Dorsolateral prefrontal cortex (tissue), 120 donors: ENCODE measurements at regions of chr1 and their contacts with region 1.

Region 1: GRCh38 chr1:83931658-83932253 is 67.2 kb downstream of the TTLL7 start:
- DNase-seq: peak in 1 of 10 donors; percentile 14
- H3K4me3 ChIP-seq: no peak overlapping the region
- H3K27ac ChIP-seq: peak overlapping the region in 57 of 59 donors; percentile 21 to 87 (median 74)
- H3K27me3 ChIP-seq: no peaks in the 10 kb centered on the region
- CTCF ChIP-seq: peak; percentile 41 to 88 (median 76)

Region 2: DNA sequence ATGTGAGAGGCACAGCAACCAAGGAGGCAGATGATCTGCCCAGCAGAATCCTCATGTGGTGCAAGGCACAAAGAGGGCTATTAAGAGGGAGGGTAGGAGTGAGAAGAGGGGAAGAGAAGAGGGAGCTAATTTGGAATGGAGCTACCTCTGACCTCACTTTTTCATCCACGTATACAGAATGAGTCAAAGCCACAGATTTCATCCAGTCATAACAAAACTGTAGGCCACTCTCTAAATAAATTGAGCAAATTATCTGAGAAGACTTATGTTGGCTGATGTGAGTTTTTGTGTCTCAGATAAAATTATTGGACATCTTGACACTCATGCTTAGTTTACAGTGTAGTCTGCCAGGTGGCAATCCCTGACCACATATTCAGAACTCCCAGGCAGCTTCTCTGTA is 258.4 kb before region 1 on chr1:
- intact Hi-C with region 1: no loop called
- DNase-seq: no peak
- H3K4me3 ChIP-seq: no peak overlapping the region
- H3K27ac ChIP-seq: no peak overlapping the region
- H3K27me3 ChIP-seq: no peaks in the 10 kb centered on the region
- CTCF ChIP-seq: no peak

Region 3: DNA sequence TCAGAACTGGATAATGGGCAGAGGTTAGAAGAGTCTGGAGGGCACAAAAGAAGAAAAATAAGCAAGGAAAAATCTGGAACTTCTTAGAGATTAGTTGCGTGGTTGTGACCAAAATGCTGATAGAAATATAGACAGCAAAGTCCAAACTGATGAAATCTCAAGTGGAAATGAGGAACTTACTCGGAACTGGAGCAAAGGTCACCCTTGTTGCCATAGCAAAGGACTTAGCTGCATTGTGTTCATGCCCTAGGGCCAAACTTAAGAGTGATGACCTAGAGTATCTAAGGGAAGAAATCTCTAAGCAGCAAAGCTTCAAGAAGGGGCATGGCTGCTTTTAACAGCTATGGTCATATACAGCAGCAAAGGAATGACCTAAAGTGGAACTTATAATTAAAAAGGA is 112.8 kb before region 1 on chr1:
- intact Hi-C with region 1: no loop called
- DNase-seq: no peak
- H3K4me3 ChIP-seq: no peak overlapping the region
- H3K27ac ChIP-seq: no peak overlapping the region
- H3K27me3 ChIP-seq: no peaks in the 10 kb centered on the region
- CTCF ChIP-seq: no peak

Region 4: GRCh38 chr1:84077476-84078107 is 145.8 kb after region 1 on chr1:
- intact Hi-C with region 1: loop called in 1 of 2 experiments (anchors 5 kb)
- DNase-seq: peak; percentile 71 to 90 (median 78)
- H3K4me3 ChIP-seq: peak overlapping the region; percentile 70 to 96 (median 88)
- H3K27ac ChIP-seq: peak overlapping the region; percentile 68 to 99 (median 95)
- H3K27me3 ChIP-seq: no peaks in the 10 kb centered on the region
- CTCF ChIP-seq: peak in 30 of 56 donors; percentile 6 to 50 (median 28)

Region 5: DNA sequence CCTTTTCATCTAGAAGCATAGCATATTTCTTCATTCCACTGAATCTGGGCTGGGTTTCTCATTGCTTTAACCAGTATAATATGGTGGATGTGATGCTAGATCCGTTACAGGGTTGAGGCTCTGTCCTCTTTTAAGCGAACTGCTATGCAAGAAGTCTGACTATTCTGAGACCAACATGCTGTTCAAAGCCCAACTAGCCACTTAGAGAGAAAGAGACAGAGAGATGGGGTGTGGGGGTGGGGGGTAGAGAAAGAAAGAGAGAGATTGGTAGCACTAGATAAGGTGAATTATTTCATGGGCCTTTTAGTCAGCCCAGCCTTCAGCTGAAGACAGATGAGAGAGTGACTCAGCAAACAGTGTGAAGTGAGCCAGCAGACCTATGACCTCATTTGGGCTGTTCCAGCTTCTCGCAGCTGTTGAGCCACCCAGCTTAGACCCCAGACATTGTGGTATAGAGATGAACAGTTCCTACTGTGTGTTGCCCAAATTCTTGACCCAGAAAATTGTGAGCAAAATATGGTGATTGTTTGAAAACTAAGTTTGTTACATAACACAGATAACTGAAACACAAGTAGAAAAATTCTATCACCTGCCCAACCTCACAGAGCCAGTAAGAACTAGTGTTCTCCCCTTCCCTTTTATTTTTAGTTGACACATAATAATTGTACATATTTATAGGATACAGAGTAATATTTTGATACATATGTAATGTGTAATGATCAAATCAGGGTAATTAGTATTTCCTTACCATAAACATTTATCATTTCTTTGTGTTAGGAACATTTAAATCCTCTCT is 171.6 kb after region 1 on chr1:
- intact Hi-C with region 1: loop called in 1 of 2 experiments (anchors 1 kb)
- DNase-seq: peak in 7 of 10 donors; percentile 40 to 73 (median 55)
- H3K4me3 ChIP-seq: no peak overlapping the region
- H3K27ac ChIP-seq: peak overlapping the region in 50 of 59 donors; percentile 2 to 82 (median 54)
- H3K27me3 ChIP-seq: no peaks in the 10 kb centered on the region
- CTCF ChIP-seq: peak in 3 of 56 donors; percentile 6 to 22 (median 10)

Region 6: GRCh38 chr1:84122780-84123382 is 191.1 kb after region 1 on chr1:
- intact Hi-C with region 1: loop called (anchors 2 to 5 kb)
- DNase-seq: peak in 9 of 10 donors; percentile 27 to 85 (median 53)
- H3K4me3 ChIP-seq: no peak overlapping the region
- H3K27ac ChIP-seq: peak overlapping the region in 15 of 59 donors; percentile 0 to 70 (median 31)
- H3K27me3 ChIP-seq: no peaks in the 10 kb centered on the region
- CTCF ChIP-seq: peak; percentile 18 to 96 (median 76)

Region 7: GRCh38 chr1:84772428-84772943 is 840.7 kb after region 1 on chr1:
- intact Hi-C with region 1: loop called (anchors 10 kb)
- DNase-seq: peak; percentile 69 to 95 (median 88)
- H3K4me3 ChIP-seq: no peak overlapping the region
- H3K27ac ChIP-seq: peak overlapping the region in 14 of 59 donors; percentile 1 to 82 (median 20)
- H3K27me3 ChIP-seq: no peaks in the 10 kb centered on the region
- CTCF ChIP-seq: peak; percentile 79 to 99 (median 95)